WTC11 (cell line): ENCODE measurements at regions of chr13 and their contacts with region 1.

Region 1: GRCh38 chr13:29301027-29301426 is 294.5 kb downstream of the SLC7A1 start:
- DNase-seq: peak; percentile 13
- ATAC-seq: peak; percentile 84
- H3K4me3 Mint-ChIP-seq: no peak overlapping the region
- H3K27ac Mint-ChIP-seq: no peak overlapping the region
- H3K4me1 Mint-ChIP-seq: peaks cover 13% of the 10 kb centered on the region
- H3K27me3 Mint-ChIP-seq: no peaks in the 10 kb centered on the region; the same call in 1 of the 2 replicates
- CTCF ChIP-seq: no peak

Region 2: GRCh38 chr13:27620377-27621115 is 1680.5 kb before region 1 on chr13 and contains the start of gene LNX2:
- CTCF ChIA-PET with region 1: no interaction called
- POLR2A ChIA-PET with region 1: no interaction called
- DNase-seq: peak; percentile 98
- ATAC-seq: peak; percentile 92
- H3K4me3 Mint-ChIP-seq: peak within 1 kb of the TSS; percentile 93
- H3K27ac Mint-ChIP-seq: peak within 1 kb of the TSS; percentile 96
- H3K4me1 Mint-ChIP-seq: peaks cover 54% of the 10 kb centered on the region
- H3K27me3 Mint-ChIP-seq: no peaks in the 10 kb centered on the region
- CTCF ChIP-seq: no peak
- total RNA-seq, gene LNX2: 9.6 to 10.1 TPM (median 9.8 TPM) in 3 replicates

Region 3: GRCh38 chr13:29140277-29140676 is 160.8 kb before region 1 on chr13:
- CTCF ChIA-PET with region 1: no interaction called
- POLR2A ChIA-PET with region 1: no interaction called
- DNase-seq: no peak
- ATAC-seq: no peak
- H3K4me3 Mint-ChIP-seq: no peak overlapping the region
- H3K27ac Mint-ChIP-seq: no peak overlapping the region
- H3K4me1 Mint-ChIP-seq: no peaks in the 10 kb centered on the region
- H3K27me3 Mint-ChIP-seq: no peaks in the 10 kb centered on the region; the same call in 1 of the 2 replicates
- CTCF ChIP-seq: no peak

Region 4: DNA sequence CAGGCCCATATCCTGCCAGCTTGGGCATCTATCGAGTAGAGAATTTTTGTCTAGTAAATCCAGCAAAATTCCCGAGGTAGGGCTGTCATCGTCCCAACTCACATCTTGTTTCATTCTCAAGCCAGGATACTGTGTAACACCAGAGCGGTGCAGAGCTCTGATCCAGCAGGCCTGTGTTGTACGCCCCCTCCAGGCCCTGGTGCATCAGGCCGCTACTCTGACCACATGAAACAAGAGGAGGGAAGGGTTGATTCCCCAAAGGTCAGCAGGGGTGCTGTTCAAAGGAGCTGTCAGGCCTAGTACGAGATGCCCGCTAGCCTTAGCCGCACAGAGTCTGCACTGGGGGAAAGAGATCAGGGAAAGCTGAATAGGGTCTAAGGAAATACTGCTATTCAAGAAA is 18.4 kb after region 1 on chr13:
- CTCF ChIA-PET with region 1: interaction called, 13 read pairs
- POLR2A ChIA-PET with region 1: no interaction called
- DNase-seq: peak; percentile 61
- ATAC-seq: peak; percentile 100
- H3K4me3 Mint-ChIP-seq: no peak overlapping the region
- H3K27ac Mint-ChIP-seq: no peak overlapping the region
- H3K4me1 Mint-ChIP-seq: no peaks in the 10 kb centered on the region; the same call in 1 of the 2 replicates
- H3K27me3 Mint-ChIP-seq: no peaks in the 10 kb centered on the region; the same call in 1 of the 2 replicates
- CTCF ChIP-seq: no peak

Region 5: GRCh38 chr13:29508130-29508875 is 207.3 kb after region 1 on chr13:
- CTCF ChIA-PET with region 1: no interaction called
- POLR2A ChIA-PET with region 1: no interaction called
- DNase-seq: peak; percentile 90
- ATAC-seq: peak; percentile 80
- H3K4me3 Mint-ChIP-seq: no peak overlapping the region
- H3K27ac Mint-ChIP-seq: no peak overlapping the region
- H3K4me1 Mint-ChIP-seq: peaks cover 8% of the 10 kb centered on the region; the same call in 1 of the 2 replicates
- H3K27me3 Mint-ChIP-seq: no peaks in the 10 kb centered on the region
- CTCF ChIP-seq: peak; percentile 88